ENCODE measurements at regions of chr6 and their contacts with region 1.

Region 1: GRCh38 chr6:35342258-35343091 is at the start of gene PPARD:
- DNase-seq: peak; percentile 99 to 100 (median 100)
- ATAC-seq: peak; percentile 97
- H3K4me3 ChIP-seq: peak within 1 kb of the TSS; percentile 73
- H3K27ac ChIP-seq: peak within 1 kb of the TSS; percentile 72
- H3K4me1 ChIP-seq: peaks cover 26 to 28% of the 10 kb centered on the region in 2 experiments; a peak in 4 of 5 replicates
- H3K27me3 ChIP-seq: peaks cover 0 to 6% of the 10 kb centered on the region in 2 experiments; a peak in 2 of 5 replicates
- CTCF ChIP-seq: peak; percentile 98 to 99 (median 99)
- EP300 ChIP-seq: peak; percentile 16; the same call in 1 of the 2 replicates
- POLR2A ChIP-seq: peak; percentile 65; the same call in 1 of the 2 replicates
- RAD21 ChIP-seq: peak; percentile 100
- polyA plus RNA-seq, gene PPARD: 0.14 to 0.18 TPM

Region 2: DNA sequence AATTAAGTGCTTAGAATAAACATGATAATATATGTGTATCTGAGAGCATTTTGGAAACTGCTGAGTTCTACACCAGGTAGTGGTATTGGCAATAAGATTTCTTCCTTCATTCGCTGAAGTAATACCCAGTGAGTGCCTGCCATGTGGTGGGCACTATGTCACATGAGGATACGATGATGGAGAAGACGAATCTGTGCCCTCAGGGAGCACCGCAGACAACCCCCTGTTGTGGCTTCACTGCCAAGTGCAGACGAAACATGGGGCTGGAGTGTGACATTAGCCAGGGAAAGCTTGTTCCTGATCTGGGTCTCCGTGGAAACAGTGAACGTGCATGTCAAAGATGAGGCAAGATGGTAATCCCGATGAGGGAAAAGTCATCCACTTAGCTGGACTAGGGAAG is 75.0 kb before region 1 on chr6:
- CTCF ChIA-PET with region 1: no interaction called
- POLR2A ChIA-PET with region 1: no interaction called
- in situ Hi-C with region 1: no loop called
- intact Hi-C with region 1: no loop called
- DNase-seq: no peak
- ATAC-seq: no peak
- H3K4me3 ChIP-seq: no peak overlapping the region
- H3K27ac ChIP-seq: no peak overlapping the region
- H3K4me1 ChIP-seq: peaks cover 13 to 38% of the 10 kb centered on the region in 2 experiments
- H3K27me3 ChIP-seq: no peaks in the 10 kb centered on the region
- CTCF ChIP-seq: no peak
- EP300 ChIP-seq: no peak
- POLR2A ChIP-seq: no peak
- RAD21 ChIP-seq: no peak

Region 3: GRCh38 chr6:35354361-35355135 is 12.1 kb after region 1 on chr6:
- CTCF ChIA-PET with region 1: no interaction called
- POLR2A ChIA-PET with region 1: interaction called, 29 read pairs
- in situ Hi-C with region 1: no loop called
- intact Hi-C with region 1: no loop called
- DNase-seq: no peak
- ATAC-seq: no peak
- H3K4me3 ChIP-seq: no peak overlapping the region
- H3K27ac ChIP-seq: no peak overlapping the region
- H3K4me1 ChIP-seq: no peaks in the 10 kb centered on the region; a peak in 1 of 5 replicates
- H3K27me3 ChIP-seq: no peaks in the 10 kb centered on the region
- CTCF ChIP-seq: no peak
- EP300 ChIP-seq: no peak
- POLR2A ChIP-seq: no peak
- RAD21 ChIP-seq: no peak

Region 4: GRCh38 chr6:35363293-35363750 is 20.8 kb after region 1 on chr6:
- CTCF ChIA-PET with region 1: no interaction called
- POLR2A ChIA-PET with region 1: interaction called, 7 read pairs
- in situ Hi-C with region 1: no loop called
- intact Hi-C with region 1: loop called (anchors 2 kb)
- DNase-seq: peak; percentile 86 to 96 (median 91)
- ATAC-seq: peak; percentile 94
- H3K4me3 ChIP-seq: peak overlapping the region; percentile 19
- H3K27ac ChIP-seq: peak overlapping the region; percentile 87
- H3K4me1 ChIP-seq: peaks cover 20 to 47% of the 10 kb centered on the region in 2 experiments
- H3K27me3 ChIP-seq: no peaks in the 10 kb centered on the region
- CTCF ChIP-seq: no peak
- EP300 ChIP-seq: peak; percentile 77; the same call in 1 of the 2 replicates
- POLR2A ChIP-seq: peak; percentile 88
- RAD21 ChIP-seq: no peak

Region 5: DNA sequence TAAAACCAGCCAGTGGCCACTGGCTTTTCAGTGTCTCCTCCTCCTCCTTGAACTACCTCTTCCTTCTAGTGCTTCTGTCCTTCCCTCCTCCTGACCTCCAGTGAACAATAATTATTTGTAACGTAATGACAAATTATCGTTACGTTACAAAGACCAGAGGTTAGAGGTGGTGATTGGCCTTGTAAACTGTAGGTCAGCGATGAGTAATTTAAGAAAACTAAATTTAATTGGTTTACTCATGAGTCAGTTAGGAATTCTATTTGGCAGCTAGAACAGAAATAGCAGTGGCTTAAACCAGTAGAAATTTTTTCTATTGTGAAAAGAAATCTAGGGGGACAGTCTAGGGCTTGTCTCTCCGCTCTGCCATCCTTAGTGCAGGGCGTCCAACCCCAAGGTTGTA is 38.7 kb after region 1 on chr6:
- CTCF ChIA-PET with region 1: no interaction called
- POLR2A ChIA-PET with region 1: no interaction called
- in situ Hi-C with region 1: no loop called
- intact Hi-C with region 1: no loop called
- DNase-seq: no peak
- ATAC-seq: no peak
- H3K4me3 ChIP-seq: no peak overlapping the region
- H3K27ac ChIP-seq: no peak overlapping the region
- H3K4me1 ChIP-seq: peaks cover 5 to 6% of the 10 kb centered on the region in 2 experiments; a peak in 3 of 5 replicates
- H3K27me3 ChIP-seq: no peaks in the 10 kb centered on the region; a peak in 1 of 5 replicates
- CTCF ChIP-seq: no peak
- EP300 ChIP-seq: no peak
- POLR2A ChIP-seq: no peak
- RAD21 ChIP-seq: no peak

Region 6: GRCh38 chr6:35415065-35415991 is 72.9 kb after region 1 on chr6:
- CTCF ChIA-PET with region 1: interaction called, 16 read pairs
- POLR2A ChIA-PET with region 1: interaction called, 4 read pairs
- in situ Hi-C with region 1: no loop called
- intact Hi-C with region 1: loop called (anchors 2 kb)
- DNase-seq: peak; percentile 65 to 78 (median 67)
- ATAC-seq: peak; percentile 83
- H3K4me3 ChIP-seq: no peak overlapping the region
- H3K27ac ChIP-seq: no peak overlapping the region
- H3K4me1 ChIP-seq: peaks cover 0 to 4% of the 10 kb centered on the region in 2 experiments; a peak in 2 of 5 replicates
- H3K27me3 ChIP-seq: no peaks in the 10 kb centered on the region
- CTCF ChIP-seq: peak; percentile 70 to 82 (median 72)
- EP300 ChIP-seq: no peak
- POLR2A ChIP-seq: no peak
- RAD21 ChIP-seq: peak; percentile 60 to 71

Region 7: GRCh38 chr6:35452186-35453090 is 110.0 kb after region 1 on chr6 and contains the start of gene FANCE:
- CTCF ChIA-PET with region 1: interaction called, 26 read pairs
- POLR2A ChIA-PET with region 1: interaction called, 4 read pairs
- in situ Hi-C with region 1: no loop called
- intact Hi-C with region 1: loop called (anchors 1 kb)
- DNase-seq: peak; percentile 98 to 99 (median 99)
- ATAC-seq: peak; percentile 94
- H3K4me3 ChIP-seq: peak within 1 kb of the TSS; percentile 73
- H3K27ac ChIP-seq: peak within 1 kb of the TSS; percentile 78
- H3K4me1 ChIP-seq: peaks cover 18 to 27% of the 10 kb centered on the region in 2 experiments
- H3K27me3 ChIP-seq: peaks cover 1 to 5% of the 10 kb centered on the region in 2 experiments; a peak in 1 of 5 replicates
- CTCF ChIP-seq: no peak; a peak in 1 of 6 replicates
- EP300 ChIP-seq: no peak
- POLR2A ChIP-seq: peak; percentile 92
- RAD21 ChIP-seq: no peak
- polyA plus RNA-seq, gene FANCE: 5.7 to 5.9 TPM

Region 8: GRCh38 chr6:35601331-35602132 is 259.1 kb after region 1 on chr6:
- CTCF ChIA-PET with region 1: no interaction called
- POLR2A ChIA-PET with region 1: no interaction called
- in situ Hi-C with region 1: no loop called
- intact Hi-C with region 1: no loop called
- DNase-seq: no peak
- ATAC-seq: no peak
- H3K4me3 ChIP-seq: no peak overlapping the region
- H3K27ac ChIP-seq: no peak overlapping the region
- H3K4me1 ChIP-seq: no peaks in the 10 kb centered on the region
- H3K27me3 ChIP-seq: no peaks in the 10 kb centered on the region
- CTCF ChIP-seq: no peak
- EP300 ChIP-seq: no peak
- POLR2A ChIP-seq: no peak
- RAD21 ChIP-seq: no peak

Measured in K562 (cell line).